Calu3 (cell line): ENCODE measurements at regions of chr3 and their contacts with region 1.

Region 1: GRCh38 chr3:171459942-171460724 is at the start of gene TNIK:
- DNase-seq: peak; percentile 96
- H3K4me3 Mint-ChIP-seq: peak within 1 kb of the TSS; percentile 97
- H3K27ac Mint-ChIP-seq: peak within 1 kb of the TSS; percentile 85
- H3K4me1 Mint-ChIP-seq: peaks cover 45% of the 10 kb centered on the region
- H3K27me3 Mint-ChIP-seq: no peaks in the 10 kb centered on the region
- CTCF ChIP-seq: peak; percentile 61
- total RNA-seq, gene TNIK: 17.6 and 19.7 TPM in 2 replicates

Region 2: GRCh38 chr3:171049861-171050444 is 410.2 kb before region 1 on chr3:
- CTCF ChIA-PET with region 1: interaction called, 5 read pairs
- intact Hi-C with region 1: loop called (anchors 5 kb)
- DNase-seq: peak; percentile 80
- H3K4me3 Mint-ChIP-seq: no peak overlapping the region
- H3K27ac Mint-ChIP-seq: peak overlapping the region; percentile 11
- H3K4me1 Mint-ChIP-seq: peaks cover 28% of the 10 kb centered on the region
- H3K27me3 Mint-ChIP-seq: no peaks in the 10 kb centered on the region
- CTCF ChIP-seq: peak; percentile 90

Region 3: DNA sequence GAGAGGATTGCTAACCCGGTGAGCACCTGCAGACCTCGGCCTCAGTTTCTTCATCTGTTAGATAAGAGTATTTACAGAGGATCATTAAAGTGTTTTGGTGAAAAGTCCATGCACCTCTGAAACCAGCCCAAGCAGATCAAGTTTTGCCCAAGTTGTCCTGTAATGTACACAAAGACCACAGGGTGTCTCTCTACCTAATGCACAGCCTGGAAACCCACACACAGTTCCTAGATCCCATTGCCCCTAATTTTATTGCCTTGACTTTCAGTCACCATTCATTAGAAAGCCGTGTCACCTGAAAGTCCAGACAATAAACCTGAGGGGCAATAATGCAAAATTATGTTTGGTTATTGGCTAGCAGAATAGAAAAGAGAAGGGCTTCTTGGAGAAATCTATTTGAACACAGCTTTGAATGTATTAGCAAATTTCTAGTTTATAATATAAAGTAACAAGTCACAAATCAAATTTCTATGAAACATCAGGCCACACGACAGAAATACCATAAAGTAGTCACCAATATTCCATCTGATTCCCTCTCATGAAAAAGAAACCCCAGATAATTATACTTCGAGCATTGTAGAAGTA is 272.3 kb before region 1 on chr3:
- CTCF ChIA-PET with region 1: interaction called, 7 read pairs
- intact Hi-C with region 1: loop called (anchors 2 kb)
- DNase-seq: peak; percentile 54
- H3K4me3 Mint-ChIP-seq: no peak overlapping the region
- H3K27ac Mint-ChIP-seq: no peak overlapping the region
- H3K4me1 Mint-ChIP-seq: peaks cover 46% of the 10 kb centered on the region
- H3K27me3 Mint-ChIP-seq: no peaks in the 10 kb centered on the region
- CTCF ChIP-seq: peak; percentile 91

Region 4: DNA sequence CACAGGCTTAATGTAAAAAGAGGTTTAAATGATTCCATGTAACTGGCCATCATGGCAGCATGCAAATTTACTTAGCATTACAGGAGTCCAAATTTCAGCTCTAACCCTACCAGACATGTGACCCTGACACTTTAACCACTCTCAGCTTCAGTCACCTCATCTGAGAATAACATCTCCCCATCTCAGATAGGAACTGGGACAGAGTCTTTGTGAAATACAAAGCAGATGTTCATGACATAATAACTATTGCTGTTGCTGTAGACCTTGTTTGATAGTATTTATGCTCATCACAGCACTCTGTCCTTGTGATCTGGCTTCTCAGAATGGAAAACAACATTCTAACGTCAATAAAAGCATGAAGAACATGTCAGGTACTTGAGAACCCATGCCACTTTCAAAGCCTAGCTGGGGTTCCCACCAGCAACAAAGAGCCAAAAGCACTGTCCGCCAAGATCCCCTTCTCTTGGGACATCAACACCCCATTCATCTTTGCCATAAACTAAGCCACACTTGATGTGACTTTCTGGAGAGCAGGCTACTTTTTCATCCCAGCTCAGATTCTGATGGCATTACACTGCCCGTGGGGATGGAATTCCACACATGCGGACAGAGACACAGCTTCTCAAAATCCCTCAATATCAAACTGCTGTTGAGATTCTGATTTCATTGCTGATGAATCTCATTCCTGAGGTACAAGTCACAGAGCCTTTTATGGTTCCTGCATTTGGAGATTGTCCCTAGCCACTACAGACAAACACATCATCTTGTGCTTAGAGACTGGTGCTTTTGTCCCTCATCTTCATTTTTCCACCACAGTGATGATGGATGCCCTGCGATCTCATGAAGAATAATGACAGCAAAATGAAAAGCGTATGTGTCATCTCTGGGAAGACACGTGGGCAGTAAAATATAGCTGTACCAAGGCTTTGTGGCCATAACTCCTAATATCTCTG is 202.6 kb before region 1 on chr3:
- CTCF ChIA-PET with region 1: no interaction called
- intact Hi-C with region 1: loop called (anchors 10 kb)
- DNase-seq: no peak
- H3K4me3 Mint-ChIP-seq: no peak overlapping the region
- H3K27ac Mint-ChIP-seq: no peak overlapping the region
- H3K4me1 Mint-ChIP-seq: peaks cover 85% of the 10 kb centered on the region
- H3K27me3 Mint-ChIP-seq: no peaks in the 10 kb centered on the region
- CTCF ChIP-seq: no peak

Region 5: GRCh38 chr3:171358181-171358880 is 101.8 kb before region 1 on chr3:
- CTCF ChIA-PET with region 1: no interaction called
- intact Hi-C with region 1: loop called (anchors 2 kb)
- DNase-seq: no peak
- H3K4me3 Mint-ChIP-seq: no peak overlapping the region
- H3K27ac Mint-ChIP-seq: peak overlapping the region; percentile 78
- H3K4me1 Mint-ChIP-seq: peaks cover 73% of the 10 kb centered on the region
- H3K27me3 Mint-ChIP-seq: no peaks in the 10 kb centered on the region
- CTCF ChIP-seq: no peak

Region 6: GRCh38 chr3:171447338-171447760 is 12.8 kb before region 1 on chr3:
- CTCF ChIA-PET with region 1: interaction called, 10 read pairs
- intact Hi-C with region 1: no loop called
- DNase-seq: no peak
- H3K4me3 Mint-ChIP-seq: no peak overlapping the region
- H3K27ac Mint-ChIP-seq: no peak overlapping the region
- H3K4me1 Mint-ChIP-seq: peaks cover 12% of the 10 kb centered on the region
- H3K27me3 Mint-ChIP-seq: no peaks in the 10 kb centered on the region
- CTCF ChIP-seq: no peak

Region 7: DNA sequence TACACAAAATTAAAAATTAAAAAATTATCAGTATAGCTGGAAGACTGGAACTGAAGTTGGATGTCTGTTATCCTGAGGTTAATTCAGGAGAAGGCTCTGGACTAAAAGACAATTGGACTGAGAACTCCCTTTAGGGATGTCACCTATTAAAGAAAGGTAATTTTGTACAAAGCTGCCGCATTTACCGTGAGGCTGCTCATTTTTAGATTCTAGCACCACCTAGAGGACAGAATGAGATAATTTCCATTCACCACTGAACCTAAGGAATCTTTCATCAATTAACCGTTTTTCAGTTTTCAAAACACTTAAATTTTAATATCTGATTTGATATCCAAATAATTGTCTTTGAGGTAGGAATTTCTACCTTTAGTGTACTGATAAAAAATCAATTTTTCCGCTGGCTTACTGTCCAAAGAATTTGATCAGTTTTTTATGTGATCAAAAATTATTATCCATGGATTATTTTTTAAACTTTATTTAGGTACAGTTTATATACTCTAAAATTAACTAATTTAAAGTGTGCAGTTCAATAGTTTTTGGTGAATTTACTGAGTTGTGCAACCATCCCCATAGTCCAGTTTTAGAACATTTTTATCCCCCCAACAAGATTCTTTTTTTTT is 106.8 kb after region 1 on chr3:
- CTCF ChIA-PET with region 1: interaction called, 3 read pairs
- intact Hi-C with region 1: loop called (anchors 2 kb)
- DNase-seq: peak; percentile 21
- H3K4me3 Mint-ChIP-seq: no peak overlapping the region
- H3K27ac Mint-ChIP-seq: no peak overlapping the region
- H3K4me1 Mint-ChIP-seq: no peaks in the 10 kb centered on the region
- H3K27me3 Mint-ChIP-seq: no peaks in the 10 kb centered on the region
- CTCF ChIP-seq: peak; percentile 87